ENCODE measurements at regions of chr5 and their contacts with region 1.

Region 1: DNA sequence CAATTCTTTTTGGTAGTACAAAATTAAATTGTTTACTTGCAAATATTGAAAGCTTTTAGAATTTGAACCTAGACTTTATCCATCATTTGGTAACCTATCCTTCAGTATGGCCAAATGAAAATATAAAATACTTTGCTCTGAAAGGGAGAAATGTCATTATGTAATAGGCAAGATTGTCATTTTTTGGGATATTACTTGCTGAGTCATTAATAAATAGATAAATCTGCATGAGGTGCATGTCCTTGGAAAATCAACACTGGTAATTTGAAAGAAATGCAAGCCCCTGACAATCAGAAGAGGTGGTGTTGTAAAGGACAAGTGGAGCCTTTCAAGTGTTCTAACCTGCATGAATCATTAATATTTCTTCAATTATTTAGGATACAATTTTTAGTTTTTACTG is 231.8 kb upstream of the CCNG1 start:
- DNase-seq: no peak
- H3K4me3 ChIP-seq: no peak overlapping the region
- H3K27ac ChIP-seq: no peak overlapping the region
- H3K4me1 ChIP-seq: no peaks in the 10 kb centered on the region
- H3K27me3 ChIP-seq: no peaks in the 10 kb centered on the region
- CTCF ChIP-seq: no peak
- EP300 ChIP-seq: no peak
- POLR2A ChIP-seq: no peak

Region 2: GRCh38 chr5:162811071-162811470 is 394.6 kb before region 1 on chr5:
- in situ Hi-C with region 1: no loop called
- intact Hi-C with region 1: loop called (anchors 5 kb)
- DNase-seq: no peak
- H3K4me3 ChIP-seq: no peak overlapping the region
- H3K27ac ChIP-seq: no peak overlapping the region
- H3K4me1 ChIP-seq: no peaks in the 10 kb centered on the region
- H3K27me3 ChIP-seq: no peaks in the 10 kb centered on the region
- CTCF ChIP-seq: no peak
- EP300 ChIP-seq: no peak
- POLR2A ChIP-seq: no peak

Region 3: DNA sequence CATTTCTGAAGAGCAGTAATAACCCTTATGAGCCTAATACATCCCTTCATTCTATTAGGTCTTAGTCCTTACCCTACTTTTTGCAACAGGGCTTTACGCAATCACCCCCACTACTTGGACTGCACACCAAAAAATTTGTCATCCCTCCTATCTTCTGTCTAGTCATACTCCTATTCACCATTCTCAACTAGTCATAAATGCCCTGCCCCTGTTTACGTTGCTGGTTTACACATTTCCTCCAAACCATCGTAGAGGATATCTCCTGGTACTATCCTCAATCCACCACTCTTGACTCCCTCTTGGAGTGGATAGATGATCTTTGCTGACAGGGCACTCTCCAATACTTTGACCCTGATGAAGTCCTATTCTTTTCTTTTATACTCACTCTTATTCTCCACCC is 133.5 kb after region 1 on chr5:
- in situ Hi-C with region 1: no loop called
- intact Hi-C with region 1: no loop called
- DNase-seq: no peak
- H3K4me3 ChIP-seq: no peak overlapping the region
- H3K27ac ChIP-seq: no peak overlapping the region
- H3K4me1 ChIP-seq: no peaks in the 10 kb centered on the region
- H3K27me3 ChIP-seq: no peaks in the 10 kb centered on the region
- CTCF ChIP-seq: no peak
- EP300 ChIP-seq: no peak
- POLR2A ChIP-seq: no peak